ENCODE measurements at regions of chr15 and their contacts with region 1.

Region 1: GRCh38 chr15:34337557-34338306 is at the start of gene SLC12A6:
- DNase-seq: peak; percentile 97
- ATAC-seq: peak; percentile 84
- H3K4me3 ChIP-seq: peak within 1 kb of the TSS; percentile 96 to 98 (median 97)
- H3K4me3 Mint-ChIP-seq: peak within 1 kb of the TSS; percentile 100
- H3K27ac ChIP-seq: peak within 1 kb of the TSS; percentile 87 to 93
- H3K27ac Mint-ChIP-seq: peak within 1 kb of the TSS; percentile 99
- H3K4me1 ChIP-seq: peaks cover 34 to 37% of the 10 kb centered on the region in 2 donors
- H3K4me1 Mint-ChIP-seq: peaks cover 48% of the 10 kb centered on the region
- H3K27me3 ChIP-seq: no peaks in the 10 kb centered on the region
- H3K27me3 Mint-ChIP-seq: no peaks in the 10 kb centered on the region
- CTCF ChIP-seq: no peak
- total RNA-seq, gene SLC12A6: 141 and 156 TPM in 2 replicates

Region 2: DNA sequence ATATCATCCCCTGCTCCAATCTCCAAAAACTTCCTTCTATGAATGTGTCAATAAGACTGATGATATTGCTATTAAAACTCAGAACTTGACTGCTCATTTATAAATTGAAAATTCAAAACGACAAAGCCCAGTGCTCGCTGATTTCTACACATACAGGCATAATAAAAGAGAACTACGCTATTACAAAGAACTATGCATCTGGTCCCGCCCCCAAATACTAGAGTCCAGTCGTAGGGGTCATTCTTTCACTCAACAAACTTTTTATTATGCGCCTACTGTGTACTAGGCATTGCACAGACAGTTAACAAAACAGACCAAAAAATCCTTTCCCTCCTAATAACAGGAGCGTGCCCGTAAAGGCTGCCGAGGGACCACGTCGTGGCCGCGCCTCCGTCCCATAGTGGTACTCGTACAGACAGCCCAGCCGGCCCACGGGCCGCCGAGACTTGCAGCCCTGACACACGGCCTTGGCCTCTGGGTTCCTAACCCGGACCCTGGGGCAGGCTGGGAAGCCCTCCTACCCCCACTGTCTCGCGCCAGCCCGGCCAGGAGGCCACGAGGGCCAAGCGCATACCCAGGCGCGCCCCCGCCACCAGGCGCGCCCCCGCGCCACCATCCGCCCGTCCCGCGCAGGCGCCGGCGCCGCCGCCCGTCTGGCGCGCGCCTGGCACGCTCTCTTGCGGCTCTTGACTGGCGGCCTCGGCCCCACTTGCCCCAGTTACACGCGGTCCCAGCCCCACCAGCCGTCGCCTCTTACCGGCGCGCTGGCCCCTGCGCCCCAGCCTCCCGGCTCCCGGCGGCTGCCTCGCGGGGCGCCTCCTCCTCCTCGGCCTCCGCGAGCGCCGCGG is 299.5 kb before region 1 on chr15:
- CTCF ChIA-PET with region 1: no interaction called
- POLR2A ChIA-PET with region 1: no interaction called
- intact Hi-C with region 1: loop called (anchors 2 kb)
- DNase-seq: peak; percentile 89
- ATAC-seq: peak; percentile 78
- H3K4me3 ChIP-seq: peak overlapping the region; percentile 63 to 98 (median 66)
- H3K4me3 Mint-ChIP-seq: peak overlapping the region; percentile 97
- H3K27ac ChIP-seq: peak overlapping the region; percentile 49 to 78
- H3K27ac Mint-ChIP-seq: peak overlapping the region; percentile 96
- H3K4me1 ChIP-seq: peaks cover 14 to 15% of the 10 kb centered on the region in 2 donors
- H3K4me1 Mint-ChIP-seq: peaks cover 18% of the 10 kb centered on the region
- H3K27me3 ChIP-seq: no peaks in the 10 kb centered on the region
- H3K27me3 Mint-ChIP-seq: no peaks in the 10 kb centered on the region
- CTCF ChIP-seq: no peak

Region 3: DNA sequence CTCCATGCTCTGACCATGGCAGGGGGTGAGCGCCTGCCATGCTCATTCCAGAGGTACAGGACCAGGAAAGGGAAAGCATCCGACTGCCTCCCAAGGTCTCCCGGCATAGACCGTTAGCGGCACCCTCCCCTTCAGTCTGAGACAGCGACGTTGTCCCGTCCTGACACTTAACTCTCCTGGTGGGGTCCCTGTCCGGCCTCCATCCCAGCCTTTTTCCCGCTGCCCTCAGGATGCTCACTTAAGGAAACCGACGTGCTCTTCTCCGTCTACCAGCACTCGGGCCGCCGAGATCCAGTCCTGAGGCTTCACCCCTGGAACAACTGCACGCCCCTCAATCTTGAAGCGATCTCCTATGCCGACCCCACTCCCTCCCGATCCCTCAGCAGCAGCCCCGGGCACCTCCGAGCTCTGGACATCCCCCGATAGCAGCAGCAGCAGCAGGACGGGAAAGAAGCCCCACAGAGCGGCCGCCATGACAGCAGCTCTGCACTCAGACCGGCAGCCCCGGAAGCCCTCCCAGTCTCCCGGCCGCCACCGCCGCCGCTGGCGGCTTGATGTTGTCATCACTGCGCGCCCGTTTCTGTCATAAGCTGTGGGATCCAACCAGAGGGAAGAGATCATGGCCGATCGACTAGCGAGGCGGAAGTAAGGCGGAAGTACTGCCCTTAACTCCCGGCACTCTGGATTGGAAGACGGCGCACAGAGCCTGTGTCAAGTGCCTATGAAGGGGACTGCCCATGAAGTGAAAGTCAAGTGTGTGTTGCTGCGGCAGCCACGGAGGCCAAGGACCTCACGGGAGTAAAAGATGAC is 236.2 kb before region 1 on chr15 and contains the starts of genes EMC7 and PGBD4:
- CTCF ChIA-PET with region 1: no interaction called
- POLR2A ChIA-PET with region 1: no interaction called
- intact Hi-C with region 1: loop called (anchors 1 kb)
- DNase-seq: peak; percentile 99
- ATAC-seq: peak; percentile 99
- H3K4me3 ChIP-seq: peak within 1 kb of the TSS; percentile 80 to 99 (median 82)
- H3K4me3 Mint-ChIP-seq: peak within 1 kb of the TSS; percentile 98
- H3K27ac ChIP-seq: peak within 1 kb of the TSS; percentile 92 to 98
- H3K27ac Mint-ChIP-seq: peak within 1 kb of the TSS; percentile 99
- H3K4me1 ChIP-seq: peaks cover 18 to 19% of the 10 kb centered on the region in 2 donors
- H3K4me1 Mint-ChIP-seq: peaks cover 41% of the 10 kb centered on the region
- H3K27me3 ChIP-seq: no peaks in the 10 kb centered on the region
- H3K27me3 Mint-ChIP-seq: no peaks in the 10 kb centered on the region
- CTCF ChIP-seq: no peak
- total RNA-seq, gene EMC7: 28.8 and 29.9 TPM in 2 replicates
- total RNA-seq, gene PGBD4: 5.2 and 5.6 TPM in 2 replicates

Region 4: DNA sequence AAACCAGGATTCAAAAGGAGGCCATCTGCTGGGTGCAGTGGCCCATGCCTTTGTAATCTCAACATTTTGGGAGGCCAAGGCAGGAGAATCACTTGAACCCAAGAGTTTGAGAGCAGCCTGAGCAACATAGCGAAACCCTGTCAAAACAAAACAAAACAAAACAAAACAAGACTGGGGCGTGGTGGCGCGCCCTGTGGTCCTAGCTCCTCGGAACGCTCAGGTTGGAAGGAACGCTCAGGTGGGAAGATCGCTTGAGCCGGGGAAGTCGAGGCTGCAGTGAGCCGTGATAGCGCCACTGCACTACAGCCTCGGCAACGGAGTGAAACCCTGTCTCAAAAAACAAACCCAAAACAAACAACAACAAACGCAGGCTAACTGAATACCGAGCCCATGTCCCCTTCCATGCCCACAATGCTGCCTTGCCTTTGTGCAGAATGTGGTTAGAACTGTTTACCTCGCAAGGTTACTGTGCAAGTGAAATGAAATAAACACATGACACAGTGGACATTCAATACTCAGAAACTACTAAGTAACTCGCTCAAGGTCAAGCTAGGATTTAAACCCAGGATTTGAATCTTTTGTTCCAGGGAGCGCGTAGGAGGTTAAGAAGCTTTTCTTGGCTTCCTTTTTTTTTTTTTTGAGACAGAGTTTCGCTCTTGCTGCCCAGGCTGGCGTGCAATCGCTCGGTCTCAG is 113.7 kb before region 1 on chr15:
- CTCF ChIA-PET with region 1: interaction called, 6 read pairs
- POLR2A ChIA-PET with region 1: no interaction called
- intact Hi-C with region 1: loop called (anchors 1 kb)
- DNase-seq: no peak
- ATAC-seq: no peak
- H3K4me3 ChIP-seq: peak overlapping the region; percentile 77 to 98 (median 82)
- H3K4me3 Mint-ChIP-seq: peak overlapping the region; percentile 94
- H3K27ac ChIP-seq: peak overlapping the region; percentile 77 to 90
- H3K27ac Mint-ChIP-seq: peak overlapping the region; percentile 98
- H3K4me1 ChIP-seq: peaks cover 8 to 16% of the 10 kb centered on the region in 2 donors
- H3K4me1 Mint-ChIP-seq: peaks cover 26% of the 10 kb centered on the region
- H3K27me3 ChIP-seq: no peaks in the 10 kb centered on the region
- H3K27me3 Mint-ChIP-seq: no peaks in the 10 kb centered on the region
- CTCF ChIP-seq: no peak

Region 5: DNA sequence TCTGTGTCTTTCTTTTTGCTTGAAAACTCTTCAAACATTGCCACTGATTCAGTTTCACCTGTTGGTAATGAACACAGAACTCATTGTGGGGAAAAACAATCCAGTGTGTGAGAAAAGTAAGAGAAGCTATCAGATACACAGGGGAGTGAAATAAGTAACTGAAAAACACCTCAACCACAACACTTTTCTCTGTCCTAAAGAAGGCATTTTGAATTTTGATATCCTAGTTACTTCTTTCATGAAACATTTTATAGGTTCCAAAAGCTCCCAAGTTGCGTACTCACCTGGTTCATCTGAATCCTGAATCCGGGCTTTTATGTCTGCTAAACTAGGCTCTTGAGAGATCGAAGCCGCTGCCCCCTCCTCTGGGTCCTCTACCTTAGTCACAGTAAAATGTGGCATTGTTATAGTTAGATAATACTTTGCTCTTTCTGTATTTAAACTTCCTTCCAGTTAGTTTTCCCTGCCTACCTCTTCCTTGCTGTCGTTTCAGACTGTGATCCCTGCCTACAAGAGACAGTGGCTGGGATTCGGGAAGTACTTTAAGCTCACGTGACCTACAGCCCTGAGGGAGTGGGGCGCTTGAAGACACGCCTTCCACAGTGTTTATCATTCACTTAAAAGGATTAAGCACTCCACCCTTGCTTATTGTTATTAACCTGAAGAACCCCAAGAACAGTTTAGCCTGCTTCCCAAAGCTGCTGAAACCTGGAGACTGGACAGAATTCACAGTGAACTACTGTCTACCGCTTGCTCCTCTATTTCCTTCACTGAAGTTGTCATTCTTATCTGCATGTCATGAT is 19.3 kb before region 1 on chr15:
- CTCF ChIA-PET with region 1: interaction called, 5 read pairs
- POLR2A ChIA-PET with region 1: interaction called, 4 read pairs
- intact Hi-C with region 1: loop called (anchors 2 kb)
- DNase-seq: peak; percentile 52
- ATAC-seq: peak; percentile 77
- H3K4me3 ChIP-seq: peak overlapping the region; percentile 45 to 88 (median 70)
- H3K4me3 Mint-ChIP-seq: peak overlapping the region; percentile 89
- H3K27ac ChIP-seq: peak overlapping the region; percentile 41 to 81
- H3K27ac Mint-ChIP-seq: peak overlapping the region; percentile 76
- H3K4me1 ChIP-seq: peaks cover 24 to 30% of the 10 kb centered on the region in 2 donors
- H3K4me1 Mint-ChIP-seq: peaks cover 65% of the 10 kb centered on the region
- H3K27me3 ChIP-seq: no peaks in the 10 kb centered on the region
- H3K27me3 Mint-ChIP-seq: no peaks in the 10 kb centered on the region
- CTCF ChIP-seq: no peak

Region 6: GRCh38 chr15:34682673-34683072 is 344.9 kb after region 1 on chr15:
- CTCF ChIA-PET with region 1: no interaction called
- POLR2A ChIA-PET with region 1: no interaction called
- intact Hi-C with region 1: no loop called
- DNase-seq: no peak
- ATAC-seq: no peak
- H3K4me3 ChIP-seq: no peak overlapping the region
- H3K4me3 Mint-ChIP-seq: no peak overlapping the region
- H3K27ac ChIP-seq: no peak overlapping the region
- H3K27ac Mint-ChIP-seq: no peak overlapping the region
- H3K4me1 ChIP-seq: no peaks in the 10 kb centered on the region
- H3K4me1 Mint-ChIP-seq: no peaks in the 10 kb centered on the region
- H3K27me3 ChIP-seq: peaks cover 0 to 2% (median 2%) of the 10 kb centered on the region in 4 experiments
- H3K27me3 Mint-ChIP-seq: peaks cover 12% of the 10 kb centered on the region
- CTCF ChIP-seq: no peak